Heart right ventricle (tissue), 16 donors: ENCODE measurements at regions of chr11 and their contacts with region 1.

Region 1: GRCh38 chr11:123301696-123302400 is 106.8 kb upstream of the CLMP start:
- DNase-seq: peak; percentile 39 to 70
- ATAC-seq: peak; percentile 84 to 91 (median 89)
- H3K4me3 ChIP-seq: peak overlapping the region in 9 of 10 donors; percentile 26 to 59 (median 48)
- H3K27ac ChIP-seq: peak overlapping the region in 4 of 10 donors; percentile 18 to 53 (median 28)
- H3K4me1 ChIP-seq: peaks cover 0 to 33% (median 13%) of the 10 kb centered on the region in 9 donors
- H3K27me3 ChIP-seq: peaks cover 0 to 26% (median 14%) of the 10 kb centered on the region in 7 donors
- CTCF ChIP-seq: peak; percentile 82 to 97 (median 92)

Region 2: DNA sequence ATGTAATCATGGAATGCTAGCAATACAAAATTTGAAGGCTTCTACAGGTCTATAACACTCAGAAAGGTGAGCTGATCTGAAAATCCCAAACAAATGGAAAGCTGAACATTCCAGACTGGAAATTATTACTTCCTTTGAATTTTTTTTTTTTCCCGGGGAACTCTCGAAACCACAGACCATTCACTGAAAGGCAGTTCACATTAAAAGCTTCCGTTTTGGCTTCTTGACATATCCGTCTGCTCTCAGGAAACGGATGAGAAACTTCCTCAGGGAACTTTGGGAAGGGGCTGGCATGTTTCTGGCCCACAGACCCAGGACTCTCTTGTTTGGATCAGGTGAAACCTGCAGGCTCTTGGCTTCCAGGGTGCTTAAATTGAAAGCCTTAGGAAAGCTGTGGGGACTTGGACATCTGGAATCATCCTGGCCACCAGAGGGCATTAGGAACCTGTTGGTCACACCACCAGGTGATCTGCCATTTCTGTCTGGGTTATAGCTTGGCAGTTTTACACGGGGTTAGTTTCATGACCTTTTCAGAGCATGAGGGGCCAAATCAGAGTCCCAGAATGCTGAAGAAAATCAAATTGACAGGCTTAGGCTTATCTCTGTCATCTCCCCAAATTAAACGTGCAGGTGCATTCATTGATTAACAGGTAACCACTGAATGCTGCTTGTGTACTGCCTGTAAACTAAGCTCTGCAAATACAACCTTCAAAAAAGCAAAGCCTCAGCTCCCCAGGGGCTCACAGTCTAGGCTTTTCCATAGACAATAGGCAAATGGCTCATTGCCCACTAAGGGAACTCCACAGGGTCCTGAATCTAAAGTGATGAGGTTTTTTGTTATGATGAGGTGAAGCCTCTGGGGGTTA is 105.5 kb after region 1 on chr11:
- intact Hi-C with region 1: loop called in 7 of 10 experiments (anchors 2 to 10 kb)
- DNase-seq: peak in 1 of 2 donors; percentile 71
- ATAC-seq: peak; percentile 31 to 68 (median 63)
- H3K4me3 ChIP-seq: peak overlapping the region in 2 of 10 donors; percentile 7 to 39
- H3K27ac ChIP-seq: peak overlapping the region in 6 of 10 donors; percentile 27 to 76 (median 46)
- H3K4me1 ChIP-seq: peaks cover 0 to 43% (median 28%) of the 10 kb centered on the region in 9 donors
- H3K27me3 ChIP-seq: peaks cover 0 to 4% (median 0%) of the 10 kb centered on the region in 7 donors
- CTCF ChIP-seq: peak; percentile 14 to 76 (median 65)

Region 3: DNA sequence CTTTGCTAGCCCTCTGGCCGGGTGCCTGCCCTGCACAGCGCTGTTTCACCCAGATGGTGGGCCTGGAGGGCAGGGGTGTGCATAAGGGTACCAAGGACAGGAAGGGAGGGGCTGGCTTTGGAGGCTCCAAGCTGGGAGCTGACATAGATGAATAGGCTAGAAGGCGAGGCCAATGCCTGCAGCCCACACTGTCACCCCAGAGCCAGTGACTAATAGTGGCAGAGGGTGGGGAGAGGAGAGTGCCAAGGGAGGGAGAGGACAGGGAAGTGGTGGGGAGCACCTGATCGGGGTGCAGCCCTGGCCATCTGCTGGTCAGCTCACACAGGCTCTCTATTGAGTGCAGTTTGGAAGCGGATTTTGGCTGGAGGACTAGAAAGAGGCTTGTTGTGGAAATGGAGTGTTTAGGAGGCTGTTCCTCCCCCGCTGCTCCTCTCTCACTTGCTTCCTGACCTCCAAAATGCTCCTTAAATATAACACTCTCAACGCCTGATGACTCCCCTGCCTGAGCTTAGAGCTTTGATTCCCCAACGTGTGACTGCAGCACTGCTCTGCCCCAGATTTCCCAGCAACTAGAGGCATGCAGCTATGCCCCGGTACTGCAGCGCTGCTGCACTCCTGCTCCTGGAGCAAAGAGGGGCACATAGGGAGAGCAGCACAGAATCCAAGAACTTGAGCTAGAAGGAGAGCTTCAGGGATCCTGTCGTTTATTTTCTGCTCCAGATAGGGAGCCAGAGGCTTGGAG is 217.4 kb after region 1 on chr11:
- intact Hi-C with region 1: no loop called
- DNase-seq: no peak
- ATAC-seq: peak; percentile 39 to 80 (median 64)
- H3K4me3 ChIP-seq: no peak overlapping the region
- H3K27ac ChIP-seq: peak overlapping the region; percentile 24 to 75 (median 66)
- H3K4me1 ChIP-seq: peaks cover under 1 to 40% (median 20%) of the 10 kb centered on the region in 9 donors
- H3K27me3 ChIP-seq: no peaks in the 10 kb centered on the region
- CTCF ChIP-seq: no peak